ENCODE measurements at regions of chr18 and their contacts with region 1.

Region 1: DNA sequence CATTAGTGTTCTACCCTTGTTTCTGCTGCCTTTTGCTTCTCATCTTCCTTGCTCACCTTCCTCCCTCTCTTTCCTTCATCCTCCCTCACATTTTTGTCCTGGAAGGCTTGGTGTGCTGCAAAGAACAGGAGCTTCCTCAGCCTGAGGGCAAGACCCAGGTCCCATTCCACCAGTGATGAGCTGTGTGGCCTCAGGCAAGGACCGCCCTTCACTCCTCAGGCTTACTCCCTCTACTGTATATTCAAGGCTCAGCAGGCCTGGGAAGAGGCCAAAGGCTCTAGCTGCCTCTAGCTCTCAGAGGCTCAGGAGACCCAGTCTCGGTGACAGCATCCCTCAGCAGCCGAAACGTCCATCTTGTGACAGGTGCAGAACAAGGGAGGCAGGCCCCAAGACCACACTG is 97.5 kb downstream of the MRO start:
- DNase-seq: no peak
- H3K4me3 ChIP-seq: no peak overlapping the region
- H3K27ac ChIP-seq: no peak overlapping the region
- H3K4me1 ChIP-seq: peaks cover 0 to 4% (median 3%) of the 10 kb centered on the region in 4 experiments; a peak in 2 of 7 replicates
- H3K27me3 ChIP-seq: no peaks in the 10 kb centered on the region
- CTCF ChIP-seq: peak; percentile 0 to 25 (median 18); a peak in 2 of 4 replicates
- EP300 ChIP-seq: no peak
- POLR2A ChIP-seq: no peak
- RAD21 ChIP-seq: peak in 1 of 2 experiments; percentile 22; a peak in 1 of 4 replicates

Region 2: GRCh38 chr18:50680971-50681370 is 41.3 kb before region 1 on chr18:
- CTCF ChIA-PET with region 1: no interaction called
- POLR2A ChIA-PET with region 1: no interaction called
- DNase-seq: no peak
- H3K4me3 ChIP-seq: no peak overlapping the region
- H3K27ac ChIP-seq: no peak overlapping the region
- H3K4me1 ChIP-seq: no peaks in the 10 kb centered on the region
- H3K27me3 ChIP-seq: no peaks in the 10 kb centered on the region
- CTCF ChIP-seq: no peak
- EP300 ChIP-seq: no peak
- POLR2A ChIP-seq: no peak
- RAD21 ChIP-seq: no peak

Region 3: GRCh38 chr18:50709193-50709592 is 13.1 kb before region 1 on chr18:
- CTCF ChIA-PET with region 1: interaction called, 20 read pairs
- POLR2A ChIA-PET with region 1: interaction called, 5 read pairs
- DNase-seq: no peak
- H3K4me3 ChIP-seq: no peak overlapping the region
- H3K27ac ChIP-seq: no peak overlapping the region
- H3K4me1 ChIP-seq: peaks cover 0 to 6% (median 1%) of the 10 kb centered on the region in 4 experiments; a peak in 3 of 7 replicates
- H3K27me3 ChIP-seq: no peaks in the 10 kb centered on the region
- CTCF ChIP-seq: peak; percentile 9 to 34 (median 23); a peak in 2 of 4 replicates
- EP300 ChIP-seq: no peak
- POLR2A ChIP-seq: no peak
- RAD21 ChIP-seq: 0 out of 4 replicates have a peak, but pooled peaks of 1 of the 2 experiments have one; percentile 1

Region 4: DNA sequence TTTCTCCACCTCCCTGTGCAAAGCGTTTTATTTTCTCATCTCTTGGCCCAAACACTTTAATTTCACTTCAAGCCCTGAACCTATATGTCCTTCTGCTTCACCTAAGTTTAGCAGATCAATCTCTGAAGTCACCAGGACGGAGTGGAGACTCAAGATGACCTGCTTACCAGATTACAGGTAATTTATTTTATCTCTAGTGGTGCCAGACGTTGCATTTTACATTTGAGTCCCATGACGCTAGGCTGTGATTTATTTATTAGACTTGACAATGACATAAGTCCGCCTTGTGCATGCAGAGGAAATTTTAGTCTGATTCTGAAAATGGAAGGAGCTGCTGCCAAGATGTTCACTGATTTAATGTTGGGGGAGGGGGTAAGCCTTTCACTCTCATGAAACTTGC is 23.6 kb after region 1 on chr18:
- CTCF ChIA-PET with region 1: no interaction called
- POLR2A ChIA-PET with region 1: no interaction called
- DNase-seq: no peak
- H3K4me3 ChIP-seq: no peak overlapping the region
- H3K27ac ChIP-seq: no peak overlapping the region
- H3K4me1 ChIP-seq: peaks cover 3 to 18% (median 12%) of the 10 kb centered on the region in 4 experiments; a peak in 5 of 7 replicates
- H3K27me3 ChIP-seq: no peaks in the 10 kb centered on the region
- CTCF ChIP-seq: no peak
- EP300 ChIP-seq: no peak
- POLR2A ChIP-seq: no peak
- RAD21 ChIP-seq: no peak